A549 (cell line): ENCODE measurements at regions of chr6 and their contacts with region 1.

Region 1: GRCh38 chr6:32177788-32178546 is at the start of gene RNF5:
- DNase-seq: peak; percentile 95 to 100
- ATAC-seq: peak; percentile 79 to 91
- H3K4me3 ChIP-seq: peak within 1 kb of the TSS; percentile 100
- H3K27ac ChIP-seq: peak within 1 kb of the TSS; percentile 97 to 99
- H3K4me1 ChIP-seq: peaks cover 20% of the 10 kb centered on the region
- CTCF ChIP-seq: no peak
- EP300 ChIP-seq: no peak
- POLR2A ChIP-seq: no peak
- RAD21 ChIP-seq: no peak
- polyA plus RNA-seq, gene RNF5: 49.1 and 54.1 TPM in 2 replicates

Region 2: DNA sequence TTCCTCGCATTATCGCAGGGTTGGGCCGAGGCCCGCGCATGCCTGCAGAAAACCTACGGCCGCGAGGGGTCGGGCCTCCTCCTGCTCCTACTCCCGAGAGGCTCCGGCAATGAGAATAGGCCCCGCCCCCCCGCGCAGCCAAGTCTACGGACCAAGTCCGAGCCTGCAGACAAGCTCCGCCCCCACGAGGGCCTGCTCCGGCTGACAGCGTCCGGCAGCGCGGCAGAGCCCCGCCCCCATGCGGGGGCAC is 17.6 kb after region 1 on chr6:
- CTCF ChIA-PET with region 1: interaction called, 8 read pairs
- POLR2A ChIA-PET with region 1: interaction called, 24 read pairs
- DNase-seq: peak; percentile 86 to 99
- ATAC-seq: no peak
- H3K4me3 ChIP-seq: peak overlapping the region; percentile 74; the same call in 1 of the 3 replicates
- H3K27ac ChIP-seq: peak overlapping the region; percentile 94; a peak in 3 of 6 replicates
- H3K4me1 ChIP-seq: peaks cover 28% of the 10 kb centered on the region
- CTCF ChIP-seq: no peak
- EP300 ChIP-seq: no peak
- POLR2A ChIP-seq: no peak
- RAD21 ChIP-seq: no peak